ENCODE measurements at regions of chr2 and their contacts with region 1.

Region 1: GRCh38 chr2:189674374-189675112 is at the start of gene ANKAR:
- DNase-seq: peak; percentile 87
- ATAC-seq: peak; percentile 94
- H3K4me3 ChIP-seq: peak within 1 kb of the TSS; percentile 73
- H3K27ac ChIP-seq: peak within 1 kb of the TSS; percentile 50
- H3K4me1 ChIP-seq: peaks cover 12% of the 10 kb centered on the region; the same call in 1 of the 2 replicates
- H3K27me3 ChIP-seq: no peaks in the 10 kb centered on the region
- CTCF ChIP-seq: peak; percentile 85
- total RNA-seq, gene ANKAR: 3.5 and 6.6 TPM in 2 replicates

Region 2: DNA sequence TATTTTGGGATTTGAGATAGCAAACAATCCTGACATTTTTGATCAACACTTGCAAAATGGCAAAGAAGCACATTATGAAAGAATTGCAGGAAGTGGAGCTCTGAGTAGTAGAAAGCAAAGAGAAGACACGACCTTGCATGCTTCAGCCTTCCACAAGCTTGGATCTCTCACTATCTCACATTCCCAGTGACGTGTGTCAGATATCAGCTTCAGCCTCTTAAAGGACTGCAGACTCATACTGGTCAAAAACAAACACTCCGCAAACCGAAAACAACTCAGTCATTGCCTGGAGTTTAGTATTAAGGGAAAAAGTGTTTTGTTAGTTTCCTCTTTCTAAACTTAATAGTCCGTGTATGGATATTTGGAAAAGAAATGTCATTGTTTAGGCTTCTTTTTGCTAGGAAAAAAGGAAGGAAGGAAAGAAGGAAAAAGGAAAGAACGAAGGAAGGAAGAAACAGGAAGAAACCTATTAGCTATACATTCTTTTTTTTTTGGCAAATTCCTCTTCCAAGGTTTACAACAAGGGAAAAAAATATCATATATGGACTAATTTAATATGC is 61.4 kb before region 1 on chr2:
- CTCF ChIA-PET with region 1: no interaction called
- POLR2A ChIA-PET with region 1: no interaction called
- intact Hi-C with region 1: no loop called
- DNase-seq: no peak
- ATAC-seq: no peak
- H3K4me3 ChIP-seq: no peak overlapping the region
- H3K27ac ChIP-seq: no peak overlapping the region
- H3K4me1 ChIP-seq: peaks cover 18% of the 10 kb centered on the region
- H3K27me3 ChIP-seq: no peaks in the 10 kb centered on the region
- CTCF ChIP-seq: no peak

Region 3: GRCh38 chr2:189698020-189698887 is 23.7 kb after region 1 on chr2:
- CTCF ChIA-PET with region 1: interaction called, 5 read pairs
- POLR2A ChIA-PET with region 1: no interaction called
- intact Hi-C with region 1: loop called (anchors 1 kb)
- DNase-seq: peak; percentile 68
- ATAC-seq: peak; percentile 57; the same call in 1 of the 2 replicates
- H3K4me3 ChIP-seq: no peak overlapping the region
- H3K27ac ChIP-seq: no peak overlapping the region
- H3K4me1 ChIP-seq: no peaks in the 10 kb centered on the region
- H3K27me3 ChIP-seq: no peaks in the 10 kb centered on the region
- CTCF ChIP-seq: peak; percentile 56

Region 4: GRCh38 chr2:189982777-189983394 is 308.3 kb after region 1 on chr2:
- CTCF ChIA-PET with region 1: no interaction called
- POLR2A ChIA-PET with region 1: no interaction called
- intact Hi-C with region 1: no loop called
- DNase-seq: peak; percentile 10
- ATAC-seq: no peak
- H3K4me3 ChIP-seq: no peak overlapping the region
- H3K27ac ChIP-seq: no peak overlapping the region
- H3K4me1 ChIP-seq: no peaks in the 10 kb centered on the region
- H3K27me3 ChIP-seq: no peaks in the 10 kb centered on the region
- CTCF ChIP-seq: peak; percentile 55

Measured in PC-3 (cell line).